ENCODE measurements at regions of chr3 and their contacts with region 1.

Region 1: GRCh38 chr3:160343132-160343531 is 55.9 kb downstream of the IFT80 start:
- DNase-seq: no peak
- ATAC-seq: peak in 2 of 4 donors; percentile 38
- H3K4me3 ChIP-seq: no peak overlapping the region
- H3K27ac ChIP-seq: no peak overlapping the region
- H3K4me1 ChIP-seq: no peaks in the 10 kb centered on the region
- H3K27me3 ChIP-seq: no peaks in the 10 kb centered on the region
- CTCF ChIP-seq: peak in 1 of 4 donors; percentile 15

Region 2: GRCh38 chr3:160163229-160163878 is 179.8 kb before region 1 on chr3:
- intact Hi-C with region 1: loop called in 2 of 3 experiments (anchors 10 kb)
- DNase-seq: no peak
- ATAC-seq: peak in 3 of 4 donors; percentile 48 to 70 (median 52)
- H3K4me3 ChIP-seq: no peak overlapping the region
- H3K27ac ChIP-seq: no peak overlapping the region
- H3K4me1 ChIP-seq: no peaks in the 10 kb centered on the region
- H3K27me3 ChIP-seq: no peaks in the 10 kb centered on the region
- CTCF ChIP-seq: peak in 2 of 4 donors; percentile 24 to 28